Activated CD4-positive, alpha-beta memory T cell treated with anti-CD3 and anti-CD28 coated beads for 36 hours (primary cell): ENCODE measurements at regions of chr4 and their contacts with region 1.

Region 1: GRCh38 chr4:39331191-39331590 is 35.0 kb downstream of the RFC1 start:
- DNase-seq: no peak
- H3K4me3 Mint-ChIP-seq: no peak overlapping the region
- H3K27ac Mint-ChIP-seq: no peak overlapping the region
- H3K4me1 Mint-ChIP-seq: peaks cover 18% of the 10 kb centered on the region
- H3K27me3 Mint-ChIP-seq: no peaks in the 10 kb centered on the region

Region 2: GRCh38 chr4:39243462-39243861 is 87.7 kb before region 1 on chr4:
- CTCF ChIA-PET with region 1: no interaction called
- POLR2A ChIA-PET with region 1: no interaction called
- intact Hi-C with region 1: no loop called
- DNase-seq: no peak
- H3K4me3 Mint-ChIP-seq: no peak overlapping the region
- H3K27ac Mint-ChIP-seq: no peak overlapping the region
- H3K4me1 Mint-ChIP-seq: no peaks in the 10 kb centered on the region
- H3K27me3 Mint-ChIP-seq: no peaks in the 10 kb centered on the region

Region 3: GRCh38 chr4:39259571-39260330 is 71.4 kb before region 1 on chr4:
- CTCF ChIA-PET with region 1: no interaction called
- POLR2A ChIA-PET with region 1: no interaction called
- intact Hi-C with region 1: no loop called
- DNase-seq: no peak
- H3K4me3 Mint-ChIP-seq: no peak overlapping the region
- H3K27ac Mint-ChIP-seq: no peak overlapping the region
- H3K4me1 Mint-ChIP-seq: no peaks in the 10 kb centered on the region
- H3K27me3 Mint-ChIP-seq: no peaks in the 10 kb centered on the region

Region 4: GRCh38 chr4:39308611-39309010 is 22.6 kb before region 1 on chr4:
- CTCF ChIA-PET with region 1: no interaction called
- POLR2A ChIA-PET with region 1: no interaction called
- intact Hi-C with region 1: no loop called
- DNase-seq: no peak
- H3K4me3 Mint-ChIP-seq: no peak overlapping the region
- H3K27ac Mint-ChIP-seq: no peak overlapping the region
- H3K4me1 Mint-ChIP-seq: no peaks in the 10 kb centered on the region
- H3K27me3 Mint-ChIP-seq: no peaks in the 10 kb centered on the region

Region 5: DNA sequence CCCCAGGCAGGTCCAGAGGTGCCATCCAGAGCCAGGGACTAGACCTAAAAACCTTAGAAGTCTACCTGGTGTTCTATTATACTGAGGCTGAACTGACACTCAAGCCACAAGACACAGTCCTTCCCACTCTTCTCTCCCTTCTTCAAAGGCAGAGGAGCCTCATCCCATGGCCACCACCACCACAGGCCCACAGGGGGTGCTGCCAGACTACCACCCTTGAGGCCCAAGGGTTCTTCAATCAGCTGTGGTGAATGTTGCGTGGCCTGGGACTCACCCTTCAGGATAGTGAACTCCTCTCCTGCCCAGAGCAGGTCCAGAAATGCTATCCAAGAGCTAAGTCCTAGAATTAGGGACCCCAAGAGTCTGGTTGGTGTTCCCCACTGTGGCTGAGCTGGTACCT is 52.5 kb after region 1 on chr4:
- CTCF ChIA-PET with region 1: no interaction called
- POLR2A ChIA-PET with region 1: no interaction called
- intact Hi-C with region 1: loop called (anchors 10 kb)
- DNase-seq: no peak
- H3K4me3 Mint-ChIP-seq: no peak overlapping the region
- H3K27ac Mint-ChIP-seq: no peak overlapping the region
- H3K4me1 Mint-ChIP-seq: no peaks in the 10 kb centered on the region
- H3K27me3 Mint-ChIP-seq: peaks cover 5% of the 10 kb centered on the region